Activated CD8-positive, alpha-beta T cell treated with anti-CD3 and anti-CD28 coated beads for 36 hours (primary cell): ENCODE measurements at regions of chr10 and their contacts with region 1.

Region 1: DNA sequence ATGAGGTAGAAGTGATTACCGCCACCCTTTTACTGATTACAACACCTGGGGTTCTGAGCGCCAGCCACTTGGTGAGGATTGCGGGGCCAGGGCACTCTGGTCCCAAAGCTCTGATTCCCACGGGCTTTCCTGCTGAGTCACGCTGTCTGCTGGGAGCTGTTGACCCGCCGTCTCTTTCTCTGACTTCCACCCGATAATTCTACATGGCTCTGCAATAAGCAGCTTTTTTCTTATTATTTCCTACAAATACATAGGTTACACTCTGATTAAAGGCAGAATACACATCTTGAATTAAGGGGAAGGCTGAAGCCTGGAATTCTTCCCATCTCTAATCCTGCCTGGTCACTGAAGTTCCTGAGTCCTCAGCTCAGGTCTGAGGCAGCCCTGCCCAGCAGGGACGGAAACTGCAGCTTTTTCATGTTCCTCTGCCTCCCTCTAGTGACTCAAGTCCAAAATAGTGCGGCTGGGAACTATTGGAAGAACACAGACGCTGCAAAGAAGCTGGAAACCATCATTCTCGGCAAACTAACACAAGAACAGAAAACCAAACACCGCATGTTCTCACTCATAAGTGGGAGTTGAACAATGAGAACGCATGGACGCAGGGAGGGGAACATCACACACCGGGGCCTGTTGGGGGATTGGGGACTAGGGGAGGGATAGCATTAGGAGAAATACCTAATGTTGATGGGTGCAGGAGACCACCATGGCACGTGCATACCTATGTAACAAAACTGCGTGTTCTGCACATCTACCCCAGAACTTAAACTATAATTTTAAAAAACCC is 178.3 kb downstream of the PRKCQ start:
- DNase-seq: peak; percentile 71
- ATAC-seq: peak; percentile 83
- H3K4me3 Mint-ChIP-seq: peak overlapping the region; percentile 1
- H3K27ac Mint-ChIP-seq: no peak overlapping the region
- H3K4me1 Mint-ChIP-seq: peaks cover 37% of the 10 kb centered on the region
- H3K27me3 Mint-ChIP-seq: peaks cover 4% of the 10 kb centered on the region
- CTCF ChIP-seq: peak; percentile 67

Region 2: GRCh38 chr10:6136215-6137201 is 265.2 kb before region 1 on chr10:
- CTCF ChIA-PET with region 1: interaction called, 17 read pairs
- POLR2A ChIA-PET with region 1: interaction called, 5 read pairs
- intact Hi-C with region 1: no loop called
- DNase-seq: peak; percentile 84
- ATAC-seq: peak; percentile 80
- H3K4me3 Mint-ChIP-seq: peak overlapping the region; percentile 58
- H3K27ac Mint-ChIP-seq: peak overlapping the region; percentile 89
- H3K4me1 Mint-ChIP-seq: peaks cover 53% of the 10 kb centered on the region
- H3K27me3 Mint-ChIP-seq: peaks cover 9% of the 10 kb centered on the region
- CTCF ChIP-seq: no peak

Region 3: GRCh38 chr10:6202684-6203330 is 198.9 kb before region 1 on chr10 and contains the start of gene PFKFB3:
- CTCF ChIA-PET with region 1: interaction called, 150 read pairs
- POLR2A ChIA-PET with region 1: interaction called, 12 read pairs
- intact Hi-C with region 1: loop called (anchors 2 kb)
- DNase-seq: peak; percentile 97
- ATAC-seq: peak; percentile 60
- H3K4me3 Mint-ChIP-seq: peak within 1 kb of the TSS; percentile 98
- H3K27ac Mint-ChIP-seq: peak within 1 kb of the TSS; percentile 98
- H3K4me1 Mint-ChIP-seq: peaks cover 33% of the 10 kb centered on the region
- H3K27me3 Mint-ChIP-seq: no peaks in the 10 kb centered on the region
- CTCF ChIP-seq: peak; percentile 97
- total RNA-seq, gene PFKFB3: 107 to 117 TPM

Region 4: GRCh38 chr10:6244510-6244909 is 157.2 kb before region 1 on chr10:
- CTCF ChIA-PET with region 1: interaction called, 17 read pairs
- POLR2A ChIA-PET with region 1: no interaction called
- intact Hi-C with region 1: no loop called
- DNase-seq: no peak
- ATAC-seq: no peak
- H3K4me3 Mint-ChIP-seq: no peak overlapping the region
- H3K27ac Mint-ChIP-seq: no peak overlapping the region
- H3K4me1 Mint-ChIP-seq: peaks cover 5% of the 10 kb centered on the region
- H3K27me3 Mint-ChIP-seq: no peaks in the 10 kb centered on the region
- CTCF ChIP-seq: no peak

Region 5: GRCh38 chr10:6313107-6313895 is 88.5 kb before region 1 on chr10:
- CTCF ChIA-PET with region 1: interaction called, 14 read pairs
- POLR2A ChIA-PET with region 1: no interaction called
- intact Hi-C with region 1: no loop called
- DNase-seq: no peak
- ATAC-seq: no peak
- H3K4me3 Mint-ChIP-seq: no peak overlapping the region
- H3K27ac Mint-ChIP-seq: no peak overlapping the region
- H3K4me1 Mint-ChIP-seq: peaks cover 8% of the 10 kb centered on the region
- H3K27me3 Mint-ChIP-seq: no peaks in the 10 kb centered on the region
- CTCF ChIP-seq: no peak

Region 6: DNA sequence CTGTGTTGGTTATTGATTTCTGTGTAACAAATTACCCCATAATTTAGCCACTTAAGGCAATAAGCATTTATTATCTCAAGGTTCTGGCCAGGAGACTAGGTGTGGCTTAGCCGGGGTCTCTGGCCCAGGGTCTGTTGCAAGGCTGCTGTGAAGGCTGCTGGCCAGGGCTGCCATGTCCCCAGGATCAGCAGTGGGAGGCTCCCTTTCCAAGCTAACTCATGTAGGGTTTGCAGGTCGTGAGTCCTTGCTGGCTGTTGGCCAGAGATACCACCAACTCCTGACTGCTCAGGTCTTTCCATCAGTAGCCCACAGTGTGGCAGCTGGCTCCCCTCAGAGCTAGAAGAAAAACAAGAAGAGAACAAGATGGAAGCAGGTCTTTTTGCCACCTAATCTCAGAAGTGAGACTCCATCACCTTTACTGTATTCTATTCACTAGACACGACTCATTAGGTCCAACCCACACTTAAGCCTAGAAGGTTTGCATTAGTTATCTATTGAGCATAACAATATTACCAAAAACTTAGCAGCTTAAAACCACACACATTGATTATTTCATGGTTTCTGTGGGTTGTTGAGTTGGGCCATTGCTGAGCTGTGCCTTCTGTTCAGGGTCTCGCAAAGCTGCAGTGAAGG is 13.4 kb before region 1 on chr10:
- CTCF ChIA-PET with region 1: interaction called, 44 read pairs
- POLR2A ChIA-PET with region 1: interaction called, 5 read pairs
- intact Hi-C with region 1: no loop called
- DNase-seq: peak; percentile 37
- ATAC-seq: peak; percentile 65
- H3K4me3 Mint-ChIP-seq: no peak overlapping the region
- H3K27ac Mint-ChIP-seq: no peak overlapping the region
- H3K4me1 Mint-ChIP-seq: peaks cover 19% of the 10 kb centered on the region
- H3K27me3 Mint-ChIP-seq: no peaks in the 10 kb centered on the region
- CTCF ChIP-seq: no peak

Region 7: GRCh38 chr10:6694447-6695140 is 292.8 kb after region 1 on chr10:
- CTCF ChIA-PET with region 1: no interaction called
- POLR2A ChIA-PET with region 1: no interaction called
- intact Hi-C with region 1: no loop called
- DNase-seq: peak; percentile 39
- ATAC-seq: no peak
- H3K4me3 Mint-ChIP-seq: no peak overlapping the region
- H3K27ac Mint-ChIP-seq: no peak overlapping the region
- H3K4me1 Mint-ChIP-seq: peaks cover 11% of the 10 kb centered on the region
- H3K27me3 Mint-ChIP-seq: peaks cover 12% of the 10 kb centered on the region
- CTCF ChIP-seq: no peak